ENCODE measurements at regions of chr1 and their contacts with region 1.

Region 1: DNA sequence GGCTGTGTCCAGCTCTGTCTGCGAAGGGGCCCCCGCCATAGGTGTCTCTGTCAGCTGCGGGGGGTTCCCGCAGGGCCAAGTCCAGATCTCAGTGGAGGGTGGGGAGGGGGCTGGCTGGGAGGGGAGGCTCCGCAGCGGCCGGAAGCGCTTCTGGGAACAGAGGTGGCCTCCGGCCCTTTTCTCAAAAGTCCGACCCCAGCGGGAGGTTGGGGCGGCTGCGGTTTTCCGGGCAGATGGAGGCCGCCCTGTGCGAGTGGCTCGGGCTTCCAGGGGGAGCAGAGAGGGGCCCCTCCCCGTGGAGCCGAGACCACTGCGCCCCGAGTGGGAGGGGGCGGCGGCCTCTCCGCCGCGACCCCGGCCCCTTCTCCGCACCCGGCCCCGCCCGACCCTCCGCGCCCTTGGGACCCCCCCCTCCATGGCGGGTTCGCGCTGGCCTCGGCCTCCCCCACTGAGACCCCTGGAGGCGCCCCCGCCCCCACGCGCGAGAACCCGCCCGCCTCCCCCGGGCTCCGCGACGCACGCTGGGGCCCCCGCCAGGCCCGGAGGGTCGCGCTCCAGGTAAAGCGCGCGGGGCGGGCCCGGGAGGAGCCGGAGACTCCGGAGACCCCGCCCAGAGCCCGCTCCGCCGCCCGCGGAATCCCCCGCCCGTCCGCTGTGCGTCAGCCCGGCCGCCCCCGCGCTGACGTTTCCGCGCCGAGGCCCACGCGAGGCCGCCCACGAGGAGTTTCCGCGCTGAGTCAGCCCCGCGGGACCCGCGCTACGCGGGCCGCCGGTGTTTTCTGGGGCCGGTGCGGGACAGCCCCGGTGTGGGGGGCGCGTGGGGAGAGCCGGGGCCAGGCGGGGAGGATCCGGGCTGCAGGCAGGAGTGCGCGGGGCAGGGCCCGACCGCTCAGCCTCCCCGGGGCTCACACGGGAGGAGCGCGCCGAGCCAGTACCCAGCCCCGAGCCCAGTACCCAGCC is 5.3 kb downstream of the TNFRSF18 start:
- DNase-seq: peak; percentile 96
- H3K4me3 Mint-ChIP-seq: peak overlapping the region; percentile 69
- H3K27ac Mint-ChIP-seq: peak overlapping the region; percentile 88
- H3K4me1 Mint-ChIP-seq: peaks cover 9% of the 10 kb centered on the region
- H3K27me3 Mint-ChIP-seq: no peaks in the 10 kb centered on the region

Region 2: DNA sequence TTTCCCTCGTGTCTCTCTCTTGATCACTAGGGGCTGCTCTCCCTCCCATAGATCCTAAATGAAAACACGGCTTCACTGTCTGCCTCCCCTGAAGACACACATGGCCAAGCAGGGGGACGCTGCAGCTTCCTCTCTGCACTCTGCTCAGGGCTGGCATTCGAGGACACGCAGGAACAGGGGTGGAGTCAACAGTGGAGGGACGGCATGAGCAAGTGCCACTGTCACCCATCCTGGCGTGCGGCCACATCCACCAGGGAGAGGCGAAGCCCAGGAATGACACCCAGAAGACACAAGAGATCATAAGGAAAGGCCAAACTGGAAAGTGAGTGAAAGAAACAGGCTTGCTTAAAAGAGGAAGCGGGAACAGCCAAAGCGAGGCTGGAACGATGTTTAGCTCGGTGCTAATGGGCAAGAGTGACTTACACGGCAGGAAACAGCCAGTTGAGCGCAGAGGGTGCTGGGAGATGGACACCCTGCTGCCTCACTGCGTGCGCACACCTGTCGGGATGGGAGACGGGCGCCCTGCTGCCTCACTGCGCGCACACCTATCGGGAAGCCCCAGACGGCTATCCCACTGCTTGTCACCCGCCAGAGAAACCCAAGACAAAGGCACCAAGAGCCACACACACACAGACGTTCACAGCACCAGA is 58.9 kb after region 1 on chr1:
- intact Hi-C with region 1: no loop called
- DNase-seq: no peak
- H3K4me3 Mint-ChIP-seq: no peak overlapping the region
- H3K27ac Mint-ChIP-seq: peak overlapping the region; percentile 28
- H3K4me1 Mint-ChIP-seq: peaks cover 2% of the 10 kb centered on the region
- H3K27me3 Mint-ChIP-seq: no peaks in the 10 kb centered on the region

Region 3: DNA sequence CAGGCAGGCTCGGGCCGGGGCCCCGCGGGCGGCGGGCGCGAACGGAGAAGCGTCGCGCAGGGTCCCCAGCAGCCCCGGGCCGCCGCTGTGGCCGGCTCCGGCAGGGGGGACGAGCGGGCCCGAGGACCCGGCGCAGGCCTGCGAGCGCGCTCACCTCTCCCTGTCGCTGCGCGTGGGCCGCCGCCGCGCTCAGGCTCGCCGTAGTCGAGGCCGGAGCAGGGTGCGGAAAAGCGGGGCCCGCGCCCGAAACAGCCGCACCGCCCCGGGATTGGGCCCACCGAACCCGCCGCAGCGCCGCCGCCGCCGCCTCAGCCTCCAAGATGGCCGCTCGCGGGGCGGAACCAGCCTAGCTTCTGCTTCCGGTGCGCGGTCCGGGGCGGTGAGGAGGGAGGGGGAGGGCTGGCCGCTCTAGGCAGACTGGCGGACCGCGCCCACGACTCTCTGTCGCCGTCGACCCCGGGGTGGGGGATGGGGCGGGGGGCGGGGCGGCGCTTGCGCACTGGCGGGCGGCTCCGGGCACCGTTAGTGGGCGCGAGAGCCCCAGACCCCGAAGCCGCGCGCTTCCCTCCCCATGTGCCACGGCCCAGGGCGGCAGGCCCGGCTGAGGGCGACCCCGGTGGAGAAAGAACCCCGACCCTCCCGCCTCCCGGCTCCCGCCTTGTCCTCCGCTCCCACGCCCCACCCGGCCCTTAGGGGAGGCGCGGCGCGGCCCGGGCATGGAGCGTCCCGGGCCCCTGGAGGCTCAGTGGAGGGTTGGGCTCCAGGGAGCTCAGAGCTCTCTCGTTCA is 72.6 kb after region 1 on chr1 and contains the start of gene UBE2J2:
- intact Hi-C with region 1: loop called (anchors 5 kb)
- DNase-seq: peak; percentile 97
- H3K4me3 Mint-ChIP-seq: peak within 1 kb of the TSS; percentile 86
- H3K27ac Mint-ChIP-seq: peak within 1 kb of the TSS; percentile 76
- H3K4me1 Mint-ChIP-seq: peaks cover 28% of the 10 kb centered on the region
- H3K27me3 Mint-ChIP-seq: no peaks in the 10 kb centered on the region
- total RNA-seq, gene UBE2J2: 86.9 and 87.3 TPM in 2 replicates

Region 4: GRCh38 chr1:1540090-1540817 is 339.1 kb after region 1 on chr1 and contains the start of gene TMEM240:
- intact Hi-C with region 1: no loop called
- DNase-seq: peak; percentile 75
- H3K4me3 Mint-ChIP-seq: no peak within 1 kb of the TSS
- H3K27ac Mint-ChIP-seq: no peak within 1 kb of the TSS
- H3K4me1 Mint-ChIP-seq: peaks cover 1% of the 10 kb centered on the region
- H3K27me3 Mint-ChIP-seq: peaks cover 1% of the 10 kb centered on the region
- total RNA-seq, gene TMEM240: 0.52 TPM in 1 of 2 replicates, not detected in the other